T-cell (primary cell): ENCODE measurements at regions of chr19 and their contacts with region 1.

Region 1: GRCh38 chr19:8489561-8490394 is 12.7 kb downstream of the PRAM1 start:
- DNase-seq: no peak
- ATAC-seq: no peak
- H3K4me3 ChIP-seq: no peak overlapping the region
- H3K4me3 Mint-ChIP-seq: peak overlapping the region in 1 of 3 donors; percentile 17
- H3K27ac ChIP-seq: no peak overlapping the region
- H3K27ac Mint-ChIP-seq: peak overlapping the region in 1 of 2 donors; percentile 11
- H3K4me1 ChIP-seq: peaks cover 19 to 45% of the 10 kb centered on the region in 2 experiments
- H3K4me1 Mint-ChIP-seq: peaks cover 38 to 48% (median 44%) of the 10 kb centered on the region in 3 donors
- H3K27me3 ChIP-seq: no peaks in the 10 kb centered on the region
- H3K27me3 Mint-ChIP-seq: no peaks in the 10 kb centered on the region

Region 2: GRCh38 chr19:8526345-8527067 is 36.7 kb after region 1 on chr19:
- CTCF ChIA-PET with region 1: no interaction called
- POLR2A ChIA-PET with region 1: interaction called in 1 of 2 experiments, 11 read pairs
- DNase-seq: no peak
- ATAC-seq: no peak
- H3K4me3 ChIP-seq: no peak overlapping the region
- H3K4me3 Mint-ChIP-seq: no peak overlapping the region
- H3K27ac ChIP-seq: no peak overlapping the region
- H3K27ac Mint-ChIP-seq: peak overlapping the region in 1 of 2 donors; percentile 36
- H3K4me1 ChIP-seq: peaks cover 0 to 12% of the 10 kb centered on the region in 2 experiments
- H3K4me1 Mint-ChIP-seq: peaks cover 11 to 24% (median 23%) of the 10 kb centered on the region in 3 donors
- H3K27me3 ChIP-seq: no peaks in the 10 kb centered on the region
- H3K27me3 Mint-ChIP-seq: no peaks in the 10 kb centered on the region

Region 3: GRCh38 chr19:8609279-8610040 is 119.7 kb after region 1 on chr19:
- CTCF ChIA-PET with region 1: no interaction called
- POLR2A ChIA-PET with region 1: no interaction called
- DNase-seq: peak in 4 of 35 experiments; percentile 15 to 28 (median 20)
- ATAC-seq: peak in 2 of 4 experiments; percentile 27 to 29
- H3K4me3 ChIP-seq: peak overlapping the region; percentile 77 to 99
- H3K4me3 Mint-ChIP-seq: peak overlapping the region; percentile 92 to 99 (median 94)
- H3K27ac ChIP-seq: no peak overlapping the region
- H3K27ac Mint-ChIP-seq: peak overlapping the region; percentile 82 to 94
- H3K4me1 ChIP-seq: peaks cover 10 to 41% of the 10 kb centered on the region in 2 experiments
- H3K4me1 Mint-ChIP-seq: peaks cover 33 to 50% (median 46%) of the 10 kb centered on the region in 3 donors
- H3K27me3 ChIP-seq: peaks cover 0 to 16% of the 10 kb centered on the region in 2 experiments
- H3K27me3 Mint-ChIP-seq: peaks cover 0 to 4% of the 10 kb centered on the region in 2 donors